ENCODE measurements at regions of chr3 and their contacts with region 1.

Region 1: GRCh38 chr3:67018105-67018788 is 20.1 kb downstream of the KBTBD8 start:
- DNase-seq: peak; percentile 39
- H3K4me3 Mint-ChIP-seq: peak overlapping the region; percentile 30
- H3K27ac Mint-ChIP-seq: peak overlapping the region; percentile 10
- H3K4me1 Mint-ChIP-seq: peaks cover 30% of the 10 kb centered on the region
- H3K27me3 Mint-ChIP-seq: no peaks in the 10 kb centered on the region

Region 2: DNA sequence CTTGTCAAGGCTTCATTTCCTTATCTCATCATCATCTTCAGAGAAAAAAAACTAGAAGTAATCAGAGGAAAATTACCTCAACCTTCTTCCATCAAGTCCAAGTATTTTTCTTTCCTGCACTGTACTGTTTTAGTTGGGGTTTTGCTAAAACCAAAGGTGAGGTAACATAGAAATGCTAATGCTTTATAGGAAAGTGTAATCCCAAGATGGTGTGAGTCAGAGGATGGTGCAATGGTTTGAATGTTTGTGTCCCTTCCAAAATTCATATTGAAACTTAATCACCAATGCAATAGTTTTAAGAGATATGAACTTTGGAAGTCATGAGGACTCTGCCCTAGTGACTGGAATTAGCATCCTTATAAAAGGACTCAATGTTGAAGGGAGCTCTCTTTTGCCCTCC is 59.4 kb after region 1 on chr3:
- CTCF ChIA-PET with region 1: no interaction called
- intact Hi-C with region 1: loop called (anchors 2 kb)
- DNase-seq: peak; percentile 16
- H3K4me3 Mint-ChIP-seq: no peak overlapping the region
- H3K27ac Mint-ChIP-seq: no peak overlapping the region
- H3K4me1 Mint-ChIP-seq: peaks cover 50% of the 10 kb centered on the region
- H3K27me3 Mint-ChIP-seq: no peaks in the 10 kb centered on the region

Region 3: DNA sequence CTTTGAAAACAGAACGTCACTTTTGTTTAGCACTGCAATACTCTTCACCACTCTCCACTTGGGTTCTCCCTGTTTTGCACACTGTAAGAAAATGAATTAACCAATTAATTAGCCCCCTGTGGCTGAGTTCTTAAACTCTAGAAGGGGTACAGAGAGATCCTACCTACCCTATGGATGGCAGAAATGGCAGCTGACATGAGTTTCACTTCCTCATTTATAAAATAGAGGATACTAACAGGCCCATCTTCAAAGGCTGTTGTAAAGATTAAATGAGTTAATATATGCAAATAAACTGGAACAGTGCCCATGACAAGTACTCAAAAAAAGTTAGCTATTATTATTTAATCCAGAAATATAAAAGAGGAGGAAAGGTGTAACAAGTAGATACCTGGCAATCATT is 599.3 kb after region 1 on chr3:
- CTCF ChIA-PET with region 1: no interaction called
- intact Hi-C with region 1: no loop called
- DNase-seq: no peak
- H3K4me3 Mint-ChIP-seq: no peak overlapping the region
- H3K27ac Mint-ChIP-seq: no peak overlapping the region
- H3K4me1 Mint-ChIP-seq: peaks cover 23% of the 10 kb centered on the region
- H3K27me3 Mint-ChIP-seq: no peaks in the 10 kb centered on the region

Region 4: DNA sequence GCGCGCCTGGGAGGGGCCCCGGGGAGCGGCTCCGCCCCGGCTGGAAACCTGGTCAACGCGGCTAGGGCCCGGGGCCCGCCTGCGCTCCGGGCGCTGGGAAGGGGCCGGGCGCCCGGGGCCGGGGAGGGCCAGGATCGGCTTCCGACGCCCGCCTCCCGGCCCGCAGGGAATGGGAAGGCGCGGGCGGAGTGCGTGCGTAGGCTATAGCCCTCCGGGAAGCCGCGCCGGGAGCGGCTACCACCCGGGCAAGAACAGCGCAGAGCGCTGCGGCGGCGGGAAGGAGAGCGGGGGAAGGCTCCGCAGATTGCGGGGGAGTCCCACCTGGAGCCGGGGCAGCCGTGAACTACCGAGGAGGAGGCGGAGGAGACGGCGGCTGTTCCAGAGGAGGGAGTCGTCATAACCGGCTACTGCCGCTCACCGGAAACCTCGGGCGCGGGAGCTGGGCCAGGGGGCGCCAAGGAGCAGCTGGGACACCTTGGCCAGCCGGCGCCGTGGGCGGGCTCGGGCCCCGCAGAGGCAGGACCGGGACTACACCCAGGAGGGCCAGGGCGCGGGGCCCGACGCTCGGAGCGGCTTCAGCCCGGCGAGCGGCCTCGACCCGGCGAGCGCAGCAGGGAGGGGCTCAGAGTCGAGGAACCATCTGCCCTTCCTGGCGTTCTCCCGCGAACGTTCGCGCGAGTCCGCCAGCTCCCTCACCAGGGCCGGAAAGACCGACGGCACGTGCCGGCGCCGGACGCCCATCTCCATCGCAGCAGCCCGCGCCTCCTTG is 1995.2 kb after region 1 on chr3 and contains the start of gene EOGT:
- CTCF ChIA-PET with region 1: no interaction called
- intact Hi-C with region 1: loop called (anchors 5 kb)
- DNase-seq: peak; percentile 88
- H3K4me3 Mint-ChIP-seq: peak within 1 kb of the TSS; percentile 78
- H3K27ac Mint-ChIP-seq: peak within 1 kb of the TSS; percentile 73
- H3K4me1 Mint-ChIP-seq: peaks cover 15% of the 10 kb centered on the region
- H3K27me3 Mint-ChIP-seq: no peaks in the 10 kb centered on the region
- total RNA-seq, gene EOGT: 4.8 TPM